Prostate gland (tissue), 2 donors: ENCODE measurements at regions of chr10 and their contacts with region 1.

Region 1: DNA sequence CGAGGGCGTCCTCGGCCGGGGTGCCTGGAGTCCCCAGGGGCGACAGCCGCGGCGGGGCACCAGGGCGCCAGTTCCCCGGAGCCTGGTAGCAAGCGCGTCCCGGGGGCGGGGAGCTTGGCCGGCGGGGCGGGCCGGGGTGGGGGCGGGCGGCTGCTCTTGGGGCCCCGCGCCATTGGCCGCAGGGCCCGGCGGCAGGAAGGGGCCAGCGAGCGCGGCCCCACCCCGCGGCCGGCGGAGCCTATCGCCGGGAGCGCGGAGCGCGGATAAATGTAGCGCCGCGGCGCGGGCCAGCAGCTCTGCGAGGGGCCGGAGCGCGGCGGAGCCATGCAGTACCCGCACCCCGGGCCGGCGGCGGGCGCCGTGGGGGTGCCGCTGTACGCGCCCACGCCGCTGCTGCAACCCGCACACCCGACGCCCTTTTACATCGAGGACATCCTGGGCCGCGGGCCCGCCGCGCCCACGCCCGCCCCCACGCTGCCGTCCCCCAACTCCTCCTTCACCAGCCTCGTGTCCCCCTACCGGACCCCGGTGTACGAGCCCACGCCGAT is at the start of gene HHEX:
- DNase-seq: peak; percentile 55
- H3K4me3 ChIP-seq: peak within 1 kb of the TSS; percentile 50 to 65
- H3K27ac ChIP-seq: peak within 1 kb of the TSS; percentile 73 to 77
- H3K4me1 ChIP-seq: no peaks in the 10 kb centered on the region
- H3K27me3 ChIP-seq: no peaks in the 10 kb centered on the region
- CTCF ChIP-seq: no peak
- POLR2A ChIP-seq: peak; percentile 46
- total RNA-seq, gene HHEX: 3.0 to 6.6 TPM

Region 2: GRCh38 chr10:92848441-92849233 is 158.9 kb after region 1 on chr10 and contains the start of gene EXOC6:
- intact Hi-C with region 1: loop called (anchors 10 kb)
- DNase-seq: peak; percentile 73
- H3K4me3 ChIP-seq: peak within 1 kb of the TSS; percentile 80 to 95
- H3K27ac ChIP-seq: peak within 1 kb of the TSS; percentile 83 to 91
- H3K4me1 ChIP-seq: no peaks in the 10 kb centered on the region
- H3K27me3 ChIP-seq: no peaks in the 10 kb centered on the region
- CTCF ChIP-seq: peak in 1 of 4 experiments; percentile 32
- POLR2A ChIP-seq: no peak
- total RNA-seq, gene EXOC6: 13.5 to 598 TPM